GM10248 (cell line): ENCODE measurements at regions of chr11 and their contacts with region 1.

Region 1: DNA sequence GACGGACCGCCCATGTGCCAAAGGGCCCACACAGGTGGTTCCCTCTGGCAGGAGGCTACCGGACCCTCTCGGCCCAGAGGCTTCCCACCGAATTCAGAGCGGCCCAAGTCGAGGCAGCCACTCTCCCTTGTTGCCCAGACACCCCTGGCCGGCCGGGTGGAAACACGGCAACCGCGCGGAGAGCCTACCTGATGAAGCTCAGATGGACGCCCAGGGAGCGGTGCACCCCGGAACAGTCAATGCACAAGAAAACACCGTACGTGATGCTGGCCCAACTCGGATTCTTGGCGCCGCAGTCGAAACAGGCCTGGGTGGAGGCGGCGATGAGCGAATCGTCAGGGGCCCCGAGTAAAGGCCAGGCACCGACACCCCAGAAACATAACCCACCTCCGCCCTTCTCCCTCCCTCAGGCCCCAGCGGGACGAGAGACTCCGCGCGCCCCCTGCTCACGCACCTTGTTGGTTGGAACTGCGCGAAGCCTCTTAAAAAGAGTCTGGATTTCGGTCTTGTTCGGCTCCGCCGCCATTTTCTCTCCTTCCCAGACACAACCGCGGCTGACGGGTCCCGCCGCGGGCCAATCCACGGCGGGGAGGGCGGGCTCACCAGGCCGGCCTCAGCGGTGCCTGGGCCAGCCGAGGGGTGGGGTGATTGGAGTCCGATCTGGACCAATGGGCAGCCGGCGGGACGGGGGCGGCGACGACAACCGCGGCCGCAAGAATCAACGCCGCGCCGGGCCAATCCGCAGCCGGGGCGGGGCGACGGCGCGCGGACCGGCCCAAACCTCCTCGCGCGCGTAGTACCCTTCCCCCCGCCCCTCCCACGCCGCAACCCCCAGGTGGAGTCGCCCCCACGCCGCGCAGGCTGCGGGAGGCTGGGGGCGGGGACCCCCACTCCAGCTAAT is at the start of gene ARFGAP2:
- DNase-seq: peak; percentile 100
- CTCF ChIP-seq: no peak

Region 2: DNA sequence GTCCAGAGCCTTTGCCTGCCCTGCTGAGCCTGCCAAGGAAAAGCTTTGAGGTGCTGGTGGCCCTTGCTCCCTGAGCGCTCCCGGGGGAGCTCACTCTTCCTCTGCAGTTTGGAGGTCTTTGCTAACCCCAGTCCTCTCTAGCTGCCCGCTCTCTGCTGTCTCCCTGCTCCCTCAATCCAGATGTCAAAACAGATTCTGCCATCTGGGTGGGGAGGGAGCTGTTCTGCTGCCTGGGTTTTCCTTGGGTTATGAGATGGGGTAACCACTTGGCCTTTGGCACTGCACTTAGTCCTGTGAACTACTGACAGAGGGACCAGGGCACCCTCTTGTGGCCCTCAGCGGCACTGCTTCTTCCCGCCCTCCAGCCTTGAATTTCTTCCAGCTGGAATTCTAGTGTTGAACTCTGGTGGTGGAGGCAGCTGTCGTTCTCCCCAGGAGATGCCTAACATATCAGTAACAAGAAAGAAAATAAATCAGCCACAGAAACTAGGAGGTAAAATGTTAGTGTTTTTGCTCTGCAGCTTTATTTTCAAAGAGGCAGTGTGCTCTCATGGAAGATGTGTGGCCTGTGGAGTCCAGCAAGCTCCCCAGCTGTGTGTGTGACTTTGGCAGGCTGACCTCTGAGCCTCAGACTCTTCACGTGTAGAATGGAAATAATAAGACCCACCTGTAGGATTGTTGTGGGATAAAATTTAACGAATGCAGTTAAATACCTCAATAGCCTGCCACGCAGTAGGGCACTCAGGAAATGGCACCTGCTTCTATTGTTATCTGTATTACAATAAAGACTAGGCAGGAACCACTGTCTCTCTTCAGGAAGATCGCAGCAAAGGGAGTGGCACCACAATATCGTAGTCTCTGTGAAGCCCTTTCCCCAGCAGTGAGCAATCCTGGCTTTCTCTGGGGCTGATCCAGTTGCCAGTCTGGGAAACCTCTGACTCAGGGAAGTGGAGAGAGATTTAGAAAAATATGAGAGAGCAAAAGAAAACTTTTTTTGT is 23.3 kb before region 1 on chr11:
- CTCF ChIA-PET with region 1: interaction called, 10 read pairs
- POLR2A ChIA-PET with region 1: interaction called, 5 read pairs
- DNase-seq: peak; percentile 80
- CTCF ChIP-seq: peak; percentile 95

Region 3: DNA sequence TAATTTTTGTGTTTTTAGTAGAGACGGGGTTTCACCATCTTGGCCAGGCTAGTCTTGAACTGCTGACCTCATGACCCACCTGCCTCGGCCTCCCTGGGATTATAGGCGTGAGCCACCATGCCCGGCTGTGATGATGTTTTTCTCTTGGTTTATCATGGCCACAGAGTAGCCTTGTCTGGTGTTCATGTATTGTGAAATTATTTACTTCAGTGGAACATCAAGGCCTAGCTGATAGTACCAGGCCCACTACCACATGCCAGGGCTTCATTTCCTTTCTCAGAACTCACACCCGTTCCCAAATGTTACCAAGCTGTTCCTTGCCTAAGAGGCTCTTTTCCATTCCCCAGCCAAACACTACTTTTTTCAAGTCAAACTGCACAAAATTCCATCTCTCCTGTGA is 32.0 kb after region 1 on chr11:
- CTCF ChIA-PET with region 1: interaction called, 14 read pairs
- POLR2A ChIA-PET with region 1: no interaction called
- DNase-seq: no peak
- CTCF ChIP-seq: no peak

Region 4: GRCh38 chr11:47259178-47259977 is 82.8 kb after region 1 on chr11:
- CTCF ChIA-PET with region 1: interaction called, 66 read pairs
- POLR2A ChIA-PET with region 1: no interaction called
- DNase-seq: peak; percentile 72
- CTCF ChIP-seq: peak; percentile 59

Region 5: GRCh38 chr11:47407746-47408590 is 231.4 kb after region 1 on chr11 and contains the start of gene SLC39A13:
- CTCF ChIA-PET with region 1: interaction called, 27 read pairs
- POLR2A ChIA-PET with region 1: no interaction called
- DNase-seq: peak; percentile 97
- CTCF ChIP-seq: peak; percentile 98